A673 (cell line): ENCODE measurements at regions of chr18 and their contacts with region 1.

Region 1: DNA sequence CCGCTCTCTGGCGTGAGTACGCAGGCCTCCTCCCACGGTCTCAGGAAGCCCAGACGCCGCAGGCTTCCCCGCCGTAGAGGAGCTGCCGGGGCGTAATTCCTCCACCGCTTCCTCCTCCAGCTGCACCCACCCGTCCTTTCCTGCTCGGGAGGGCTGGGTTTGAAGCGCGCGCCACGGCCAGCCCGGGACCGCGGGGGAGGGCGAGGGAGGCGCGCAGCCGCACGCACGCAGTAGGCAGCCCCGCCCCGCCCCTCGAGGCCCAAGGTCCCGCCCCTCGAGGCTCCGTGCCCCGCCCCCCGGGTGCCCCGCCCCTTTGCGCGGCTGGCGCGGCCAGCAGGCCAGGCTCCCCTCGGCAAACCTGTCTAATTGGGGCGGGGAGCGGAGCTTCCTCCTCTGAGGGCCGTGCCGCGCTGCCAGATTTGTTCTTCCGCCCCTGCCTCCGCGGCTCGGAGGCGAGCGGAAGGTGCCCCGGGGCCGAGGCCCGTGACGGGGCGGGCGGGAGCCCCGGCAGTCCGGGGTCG is at the start of gene MALT1:
- DNase-seq: peak; percentile 96
- H3K4me3 ChIP-seq: peak within 1 kb of the TSS; percentile 81
- H3K27ac ChIP-seq: peak within 1 kb of the TSS; percentile 88
- H3K4me1 ChIP-seq: peaks cover 28% of the 10 kb centered on the region
- H3K27me3 ChIP-seq: no peaks in the 10 kb centered on the region
- CTCF ChIP-seq: no peak
- total RNA-seq, gene MALT1: 23.0 and 24.4 TPM in 2 replicates

Region 2: GRCh38 chr18:58529714-58530354 is 141.3 kb before region 1 on chr18:
- CTCF ChIA-PET with region 1: no interaction called
- POLR2A ChIA-PET with region 1: no interaction called
- intact Hi-C with region 1: loop called (anchors 5 kb)
- DNase-seq: peak; percentile 77
- H3K4me3 ChIP-seq: no peak overlapping the region
- H3K27ac ChIP-seq: no peak overlapping the region
- H3K4me1 ChIP-seq: peaks cover 3% of the 10 kb centered on the region
- H3K27me3 ChIP-seq: no peaks in the 10 kb centered on the region
- CTCF ChIP-seq: peak; percentile 88

Region 3: GRCh38 chr18:58584200-58585127 is 86.7 kb before region 1 on chr18:
- CTCF ChIA-PET with region 1: no interaction called
- POLR2A ChIA-PET with region 1: no interaction called
- intact Hi-C with region 1: loop called (anchors 5 kb)
- DNase-seq: peak; percentile 76
- H3K4me3 ChIP-seq: no peak overlapping the region
- H3K27ac ChIP-seq: peak overlapping the region; percentile 6
- H3K4me1 ChIP-seq: peaks cover 19% of the 10 kb centered on the region
- H3K27me3 ChIP-seq: no peaks in the 10 kb centered on the region
- CTCF ChIP-seq: no peak

Region 4: DNA sequence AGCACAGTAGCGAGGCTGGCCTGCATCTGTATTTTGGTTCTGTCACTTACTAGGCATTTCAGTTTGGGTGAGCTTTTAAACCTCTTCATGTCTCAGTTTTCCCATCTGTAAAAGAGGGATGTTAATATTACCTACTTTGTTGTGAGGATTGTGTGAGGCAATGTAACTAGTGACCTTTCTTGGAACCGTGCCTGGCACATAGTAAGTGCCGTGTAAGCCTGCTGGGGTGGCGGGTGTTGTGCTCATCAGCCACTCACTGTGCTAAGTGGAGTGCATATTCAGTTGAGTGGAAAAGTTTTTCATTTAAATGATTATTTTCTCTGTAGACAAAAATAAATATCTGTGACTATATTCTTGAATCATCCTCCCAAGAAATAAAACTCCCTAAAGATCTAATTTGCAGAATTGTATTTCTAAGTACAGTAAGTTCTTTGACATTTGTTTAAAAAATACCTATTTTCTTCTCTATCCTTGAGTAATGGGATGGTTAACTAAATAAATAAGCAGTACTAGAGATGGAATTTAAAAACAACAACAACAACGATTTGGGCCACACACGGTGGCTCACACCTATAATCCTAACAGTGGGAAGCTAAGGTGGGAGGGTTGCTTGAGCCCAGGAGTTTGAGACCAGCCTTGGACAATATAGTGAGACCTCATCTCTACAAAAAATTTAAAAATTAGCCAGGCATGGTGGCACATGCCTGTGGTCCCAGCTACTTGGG is 56.8 kb after region 1 on chr18:
- CTCF ChIA-PET with region 1: no interaction called
- POLR2A ChIA-PET with region 1: no interaction called
- intact Hi-C with region 1: no loop called
- DNase-seq: peak; percentile 45
- H3K4me3 ChIP-seq: no peak overlapping the region
- H3K27ac ChIP-seq: no peak overlapping the region
- H3K4me1 ChIP-seq: no peaks in the 10 kb centered on the region
- H3K27me3 ChIP-seq: no peaks in the 10 kb centered on the region
- CTCF ChIP-seq: no peak